Heart right ventricle (tissue), 16 donors: ENCODE measurements at regions of chr6 and their contacts with region 1.

Region 1: DNA sequence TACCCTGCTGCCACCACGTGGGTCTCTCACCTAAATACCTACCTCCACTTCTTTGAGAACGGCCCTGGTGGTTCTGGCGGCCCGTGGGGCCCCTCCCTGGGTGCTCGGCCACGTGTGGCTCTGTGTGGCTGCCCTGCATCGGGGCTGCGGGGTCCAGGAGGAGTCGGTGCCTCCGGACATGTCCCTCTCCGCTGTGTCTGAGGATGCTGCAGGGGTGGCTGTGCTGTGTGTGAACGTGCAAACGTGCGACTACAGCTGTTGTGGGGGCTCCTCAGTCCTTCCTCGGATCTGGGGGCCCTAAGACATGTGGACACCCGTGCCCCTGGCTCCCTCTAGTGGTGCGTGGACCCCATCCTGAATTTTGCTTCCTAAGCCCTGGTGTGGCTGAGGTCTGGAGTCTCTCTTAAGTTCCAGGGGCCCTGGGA is 691.8 kb downstream of the QKI start:
- DNase-seq: peak; percentile 70 to 79
- ATAC-seq: peak; percentile 26 to 70 (median 58)
- H3K4me3 ChIP-seq: peak overlapping the region in 8 of 10 donors; percentile 10 to 36 (median 30)
- H3K27ac ChIP-seq: peak overlapping the region; percentile 80 to 97 (median 90)
- H3K4me1 ChIP-seq: peaks cover 3 to 74% (median 37%) of the 10 kb centered on the region in 9 donors
- H3K27me3 ChIP-seq: no peaks in the 10 kb centered on the region
- CTCF ChIP-seq: peak; percentile 43 to 73 (median 67)

Region 2: DNA sequence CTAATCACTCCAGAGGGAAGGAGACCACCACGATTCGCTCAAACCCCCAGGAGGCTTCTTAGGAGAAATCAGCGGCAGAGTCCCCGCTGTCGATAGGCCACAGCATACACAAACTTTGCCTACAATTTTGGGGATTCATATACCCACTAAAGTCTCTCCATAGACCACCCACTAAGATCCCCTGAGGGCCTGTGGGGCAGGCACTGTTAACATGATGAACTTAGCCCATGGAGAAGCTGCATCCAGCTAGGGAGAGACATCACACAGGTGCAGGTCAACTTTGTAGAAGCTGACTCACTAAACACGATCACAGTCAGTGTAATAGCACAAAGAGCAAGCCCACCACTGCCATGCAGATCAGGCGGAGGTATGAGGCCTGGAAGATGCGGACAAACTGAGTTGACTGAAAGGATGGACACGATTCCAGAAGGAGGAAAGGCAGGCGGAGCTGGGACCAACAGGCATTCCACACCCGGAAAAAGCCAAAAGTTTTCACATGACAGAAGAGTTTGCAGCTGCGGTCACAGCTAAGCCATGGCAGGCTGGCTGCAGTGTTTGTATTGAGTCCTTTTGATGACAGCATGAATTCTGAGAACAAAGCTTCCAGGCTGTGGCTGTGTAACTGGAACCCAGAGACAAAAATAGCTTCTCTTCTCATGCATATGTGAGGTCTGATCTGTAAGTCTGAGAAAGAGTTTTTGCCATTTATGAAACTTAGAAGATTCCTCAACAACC is 767.5 kb before region 1 on chr6:
- intact Hi-C with region 1: loop called in 2 of 10 experiments (anchors 10 kb)
- DNase-seq: peak in 1 of 2 donors; percentile 72
- ATAC-seq: peak; percentile 40 to 77 (median 64)
- H3K4me3 ChIP-seq: peak overlapping the region in 1 of 10 donors; percentile 5
- H3K27ac ChIP-seq: peak overlapping the region; percentile 71 to 98 (median 86)
- H3K4me1 ChIP-seq: peaks cover 28 to 88% (median 58%) of the 10 kb centered on the region in 9 donors
- H3K27me3 ChIP-seq: no peaks in the 10 kb centered on the region
- CTCF ChIP-seq: no peak

Region 3: GRCh38 chr6:163554663-163555062 is 551.7 kb before region 1 on chr6:
- intact Hi-C with region 1: loop called in 1 of 10 experiments (anchors 10 kb)
- DNase-seq: peak in 1 of 2 donors; percentile 44
- ATAC-seq: peak in 4 of 8 donors; percentile 29 to 53 (median 45)
- H3K4me3 ChIP-seq: no peak overlapping the region
- H3K27ac ChIP-seq: peak overlapping the region in 2 of 10 donors; percentile 37 to 49
- H3K4me1 ChIP-seq: peaks cover 0 to 69% (median 34%) of the 10 kb centered on the region in 9 donors
- H3K27me3 ChIP-seq: no peaks in the 10 kb centered on the region
- CTCF ChIP-seq: peak in 8 of 9 donors; percentile 29 to 64 (median 54)

Region 4: DNA sequence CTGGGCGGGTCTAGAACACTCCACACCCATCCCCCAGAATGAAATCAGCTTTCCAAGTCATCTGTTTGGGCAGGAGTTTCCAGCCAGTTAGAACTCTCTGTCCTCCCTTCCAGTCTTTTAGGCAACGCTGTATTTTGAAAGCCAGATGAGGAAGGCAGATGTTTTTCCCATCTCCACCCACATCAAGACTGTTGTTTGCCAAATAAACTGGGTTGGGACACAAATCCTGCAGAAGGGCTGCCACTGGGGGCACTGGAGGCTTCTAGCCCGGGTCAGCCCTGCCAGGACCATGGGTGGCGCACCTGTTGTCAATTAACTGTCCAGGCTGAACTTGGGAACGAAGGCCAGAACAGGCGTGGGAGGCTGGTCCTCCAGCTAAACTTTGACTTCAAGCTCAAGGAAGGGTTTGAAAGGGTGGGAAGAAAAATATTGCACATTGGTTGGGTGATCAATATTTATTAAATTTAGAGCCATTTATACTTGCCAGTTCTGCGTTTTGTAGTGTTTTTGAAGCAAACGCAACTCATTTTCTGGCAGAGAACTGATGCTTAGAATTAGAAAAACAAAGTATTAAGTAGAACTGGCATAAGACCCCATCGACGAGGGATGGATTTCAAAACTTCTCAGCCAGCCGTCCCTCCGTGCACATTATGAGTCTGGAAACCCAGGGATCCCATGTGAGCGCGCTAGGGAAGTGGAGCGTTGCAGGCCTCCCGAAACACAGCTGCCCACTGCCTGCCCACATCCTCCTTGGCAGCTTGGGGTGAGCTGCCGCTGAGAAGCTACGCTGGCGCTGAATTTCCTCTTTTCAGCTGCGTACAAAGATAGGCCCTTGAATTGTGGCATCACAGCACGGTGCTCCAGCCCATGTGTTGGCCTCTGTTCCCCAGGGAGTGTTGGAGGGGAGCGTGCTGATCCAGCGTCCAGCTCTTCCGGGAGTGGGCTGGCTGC is 394.5 kb before region 1 on chr6:
- intact Hi-C with region 1: loop called in 3 of 10 experiments (anchors 5 to 10 kb)
- DNase-seq: peak; percentile 80 to 83
- ATAC-seq: peak; percentile 67 to 81 (median 76)
- H3K4me3 ChIP-seq: no peak overlapping the region
- H3K27ac ChIP-seq: peak overlapping the region; percentile 69 to 86 (median 80)
- H3K4me1 ChIP-seq: peaks cover 28 to 68% (median 61%) of the 10 kb centered on the region in 9 donors
- H3K27me3 ChIP-seq: no peaks in the 10 kb centered on the region
- CTCF ChIP-seq: peak in 8 of 9 donors; percentile 17 to 59 (median 39)

Region 5: DNA sequence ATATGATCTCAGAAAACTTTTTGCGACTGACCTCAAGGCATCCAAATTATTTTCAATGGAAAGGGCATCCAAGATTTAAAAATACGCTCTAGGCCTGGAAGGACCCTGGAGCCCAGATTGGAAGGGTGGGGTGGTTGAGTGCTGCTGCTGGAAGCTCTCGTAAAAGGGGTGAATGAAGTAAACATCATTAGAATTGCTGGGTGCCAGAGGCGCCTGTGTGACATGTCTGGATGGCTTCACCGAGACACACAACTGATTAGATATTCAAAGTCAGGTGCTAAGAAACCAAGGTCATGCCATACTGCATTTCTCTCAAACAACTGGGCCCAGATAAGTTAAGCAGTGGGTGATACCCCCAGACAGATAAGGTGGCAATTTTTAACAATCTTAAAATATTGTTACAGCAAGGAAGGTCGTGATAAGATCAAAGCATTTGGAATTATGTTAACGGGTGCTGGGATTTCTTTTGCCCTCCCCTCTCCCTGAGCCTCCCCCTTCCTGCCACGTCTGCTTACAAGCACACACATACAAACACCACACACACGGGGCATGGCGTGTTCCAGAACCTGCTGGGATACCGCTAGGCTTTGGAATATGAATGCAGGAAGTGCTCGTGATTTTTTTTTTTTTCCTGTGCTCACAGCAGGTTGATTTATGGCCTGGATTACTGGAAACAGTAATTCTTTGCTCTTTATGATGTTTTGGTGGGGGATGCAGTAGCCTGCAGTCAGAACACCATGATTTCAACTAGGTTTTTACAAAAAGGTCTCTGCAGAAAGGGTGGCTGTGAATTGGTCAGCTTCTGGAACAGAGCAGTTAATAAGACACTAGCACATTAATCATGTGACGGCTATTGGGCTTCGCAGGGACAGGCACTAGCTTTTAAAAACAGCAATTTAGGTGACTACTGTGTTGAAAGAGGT is 140.7 kb before region 1 on chr6:
- intact Hi-C with region 1: loop called (anchors 2 to 10 kb)
- DNase-seq: peak; percentile 27 to 59
- ATAC-seq: peak; percentile 23 to 66 (median 56)
- H3K4me3 ChIP-seq: no peak overlapping the region
- H3K27ac ChIP-seq: peak overlapping the region; percentile 69 to 94 (median 90)
- H3K4me1 ChIP-seq: peaks cover 0 to 50% (median 19%) of the 10 kb centered on the region in 9 donors
- H3K27me3 ChIP-seq: no peaks in the 10 kb centered on the region
- CTCF ChIP-seq: no peak